Endothelial cell of umbilical vein (primary cell): ENCODE measurements at regions of chr5 and their contacts with region 1.

Region 1: GRCh38 chr5:151740336-151740942 is 18.0 kb downstream of the ATOX1 start:
- DNase-seq: peak; percentile 79
- H3K4me3 ChIP-seq: no peak overlapping the region
- H3K27ac ChIP-seq: peak overlapping the region; percentile 88
- H3K4me1 ChIP-seq: peaks cover 38% of the 10 kb centered on the region
- H3K27me3 ChIP-seq: no peaks in the 10 kb centered on the region
- CTCF ChIP-seq: peak; percentile 68 to 86
- POLR2A ChIP-seq: no peak

Region 2: GRCh38 chr5:151447174-151448037 is 293.0 kb before region 1 on chr5 and contains the start of gene SLC36A1:
- CTCF ChIA-PET with region 1: interaction called, 45 read pairs
- POLR2A ChIA-PET with region 1: no interaction called
- dilution Hi-C with region 1: no loop called
- intact Hi-C with region 1: loop called (anchors 1 kb)
- DNase-seq: peak; percentile 89
- H3K4me3 ChIP-seq: peak within 1 kb of the TSS; percentile 24 to 68 (median 57)
- H3K27ac ChIP-seq: no peak within 1 kb of the TSS
- H3K4me1 ChIP-seq: peaks cover 12% of the 10 kb centered on the region
- H3K27me3 ChIP-seq: peaks cover 3 to 7% of the 10 kb centered on the region in 2 experiments
- CTCF ChIP-seq: peak; percentile 96 to 98
- POLR2A ChIP-seq: peak; percentile 64
- total RNA-seq, gene SLC36A1: 8.6 and 11.8 TPM in 2 replicates

Region 3: GRCh38 chr5:151569132-151570046 is 171.1 kb before region 1 on chr5:
- CTCF ChIA-PET with region 1: no interaction called
- POLR2A ChIA-PET with region 1: no interaction called
- dilution Hi-C with region 1: no loop called
- intact Hi-C with region 1: loop called (anchors 5 kb)
- DNase-seq: no peak
- H3K4me3 ChIP-seq: no peak overlapping the region
- H3K27ac ChIP-seq: no peak overlapping the region
- H3K4me1 ChIP-seq: no peaks in the 10 kb centered on the region
- H3K27me3 ChIP-seq: no peaks in the 10 kb centered on the region
- CTCF ChIP-seq: no peak
- POLR2A ChIP-seq: no peak

Region 4: DNA sequence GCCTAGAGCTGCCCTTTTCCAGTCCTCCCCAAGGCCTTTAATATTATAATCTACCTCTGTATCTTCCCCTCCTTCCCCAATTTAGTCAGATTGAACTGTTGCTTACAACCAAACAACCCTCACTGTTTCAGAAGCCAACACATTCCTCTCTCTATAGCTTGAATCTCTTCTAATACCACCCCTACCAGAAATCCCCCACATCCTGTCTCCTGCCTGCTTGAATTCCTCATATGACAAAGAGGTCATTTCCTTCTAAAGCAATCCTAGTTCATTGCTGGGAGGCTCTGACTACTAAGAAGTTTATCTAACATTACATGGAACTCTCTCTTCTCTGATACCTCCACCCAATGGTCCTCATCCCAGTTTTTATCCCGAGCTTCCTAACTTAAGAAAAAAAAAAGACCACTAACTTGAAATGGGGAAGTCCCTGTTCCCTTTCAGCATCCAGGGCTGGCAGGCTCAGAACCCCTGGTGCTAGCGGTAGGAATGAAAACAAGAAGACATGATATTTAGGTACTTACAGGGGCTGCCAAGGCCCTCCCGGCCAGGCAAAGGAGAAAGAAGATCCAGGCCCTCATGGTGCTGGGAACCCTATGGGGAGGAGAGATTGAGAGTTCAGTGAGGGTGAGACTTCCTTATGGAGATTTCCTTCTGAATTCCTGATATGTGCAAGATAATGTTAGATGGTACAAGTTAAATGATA is 64.7 kb before region 1 on chr5:
- CTCF ChIA-PET with region 1: interaction called, 93 read pairs
- POLR2A ChIA-PET with region 1: interaction called, 16 read pairs
- dilution Hi-C with region 1: no loop called
- intact Hi-C with region 1: loop called (anchors 5 kb)
- DNase-seq: peak; percentile 87
- H3K4me3 ChIP-seq: peak overlapping the region in 1 of 3 experiments; percentile 16
- H3K27ac ChIP-seq: peak overlapping the region; percentile 99
- H3K4me1 ChIP-seq: peaks cover 98% of the 10 kb centered on the region
- H3K27me3 ChIP-seq: no peaks in the 10 kb centered on the region
- CTCF ChIP-seq: no peak
- POLR2A ChIP-seq: no peak

Region 5: DNA sequence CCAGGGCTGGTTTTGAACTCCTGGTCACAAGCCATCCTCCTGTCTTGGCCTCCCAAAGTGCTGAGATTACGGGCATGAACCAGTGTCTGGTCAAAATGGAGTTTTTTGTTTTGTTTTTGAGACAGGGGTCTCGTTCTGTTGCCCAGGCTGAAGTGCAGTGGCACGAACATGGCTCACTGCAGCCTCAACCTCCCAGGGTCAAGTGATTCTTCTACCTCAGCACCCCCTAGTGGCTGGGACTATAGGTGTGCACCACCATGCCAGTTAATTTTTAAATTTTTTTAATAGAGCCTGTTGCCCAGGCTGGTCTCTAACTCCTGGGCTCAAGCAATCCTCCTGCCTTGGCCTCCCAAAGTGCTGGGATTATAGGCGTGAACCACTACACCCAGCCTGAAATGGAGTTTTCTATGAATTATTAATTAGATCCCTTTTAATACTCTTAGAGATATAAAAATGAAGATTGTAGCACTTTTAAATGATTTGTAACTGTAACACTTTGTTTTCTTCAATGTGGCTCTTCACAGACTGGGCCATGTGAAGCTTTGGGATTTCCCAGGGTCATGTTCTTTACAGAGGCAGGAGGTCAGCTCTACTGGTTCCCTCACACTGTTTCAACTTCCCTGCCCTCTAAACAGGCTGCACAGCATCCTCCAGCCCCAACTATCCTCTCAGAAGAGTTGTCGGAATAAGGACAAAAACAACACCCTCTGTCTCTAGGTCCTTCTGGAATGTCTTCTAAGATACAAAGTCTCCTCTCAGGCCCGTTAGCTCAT is 21.0 kb before region 1 on chr5:
- CTCF ChIA-PET with region 1: interaction called, 34 read pairs
- POLR2A ChIA-PET with region 1: no interaction called
- dilution Hi-C with region 1: no loop called
- intact Hi-C with region 1: loop called (anchors 1 kb)
- DNase-seq: peak; percentile 60
- H3K4me3 ChIP-seq: no peak overlapping the region
- H3K27ac ChIP-seq: no peak overlapping the region
- H3K4me1 ChIP-seq: no peaks in the 10 kb centered on the region
- H3K27me3 ChIP-seq: no peaks in the 10 kb centered on the region
- CTCF ChIP-seq: peak; percentile 52 to 67
- POLR2A ChIP-seq: no peak

Region 6: DNA sequence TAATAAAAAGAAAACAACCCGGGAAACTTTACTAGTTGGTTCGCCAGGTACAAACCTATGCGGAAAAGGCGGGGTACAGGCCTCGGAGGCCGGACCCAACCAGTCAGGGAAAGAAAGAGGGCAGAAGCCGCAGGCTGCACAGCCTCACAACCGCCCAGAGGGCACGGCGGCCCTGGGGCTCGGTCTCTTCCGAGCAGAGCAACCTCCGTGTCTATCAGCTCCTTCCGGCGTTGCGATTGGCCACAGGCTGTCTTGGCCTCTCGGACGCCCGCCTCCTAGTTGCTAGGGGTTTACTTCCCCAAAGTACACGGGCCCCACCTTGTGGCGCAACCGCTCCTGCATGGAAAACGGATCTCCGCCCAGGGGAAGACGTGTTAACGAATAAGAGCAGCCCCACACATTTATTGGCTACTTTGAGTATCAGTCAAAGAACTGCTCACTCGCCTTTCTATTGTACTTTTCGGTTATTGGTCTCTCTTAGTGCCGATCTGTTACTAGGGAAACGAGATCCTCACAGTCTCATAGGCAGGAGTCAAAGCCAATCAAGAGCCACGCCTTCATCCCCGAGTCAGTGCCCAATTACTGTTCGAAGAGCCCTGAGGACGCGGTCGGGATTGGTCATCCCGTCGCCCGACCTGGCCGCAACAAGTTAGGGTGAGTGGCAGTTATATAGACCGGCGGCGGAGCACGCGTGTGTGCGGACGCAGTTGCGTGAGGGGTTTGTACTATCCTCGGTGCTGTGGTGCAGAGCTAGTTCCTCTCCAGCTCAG is 31.0 kb after region 1 on chr5 and contains the start of gene G3BP1:
- CTCF ChIA-PET with region 1: interaction called, 25 read pairs
- POLR2A ChIA-PET with region 1: no interaction called
- dilution Hi-C with region 1: no loop called
- intact Hi-C with region 1: loop called (anchors 1 kb)
- DNase-seq: peak; percentile 100
- H3K4me3 ChIP-seq: peak within 1 kb of the TSS; percentile 62 to 85 (median 65)
- H3K27ac ChIP-seq: peak within 1 kb of the TSS; percentile 75
- H3K4me1 ChIP-seq: peaks cover 32% of the 10 kb centered on the region
- H3K27me3 ChIP-seq: no peaks in the 10 kb centered on the region
- CTCF ChIP-seq: peak; percentile 74
- POLR2A ChIP-seq: peak; percentile 96
- total RNA-seq, gene G3BP1: 255 and 262 TPM in 2 replicates

Region 7: GRCh38 chr5:152424501-152424900 is 684.1 kb after region 1 on chr5:
- CTCF ChIA-PET with region 1: no interaction called
- POLR2A ChIA-PET with region 1: no interaction called
- dilution Hi-C with region 1: no loop called
- intact Hi-C with region 1: no loop called
- DNase-seq: no peak
- H3K4me3 ChIP-seq: no peak overlapping the region
- H3K27ac ChIP-seq: no peak overlapping the region
- H3K4me1 ChIP-seq: no peaks in the 10 kb centered on the region
- H3K27me3 ChIP-seq: no peaks in the 10 kb centered on the region
- CTCF ChIP-seq: no peak
- POLR2A ChIP-seq: no peak